CD4-positive, alpha-beta memory T cell (primary cell): ENCODE measurements at regions of chr11 and their contacts with region 1.

Region 1: DNA sequence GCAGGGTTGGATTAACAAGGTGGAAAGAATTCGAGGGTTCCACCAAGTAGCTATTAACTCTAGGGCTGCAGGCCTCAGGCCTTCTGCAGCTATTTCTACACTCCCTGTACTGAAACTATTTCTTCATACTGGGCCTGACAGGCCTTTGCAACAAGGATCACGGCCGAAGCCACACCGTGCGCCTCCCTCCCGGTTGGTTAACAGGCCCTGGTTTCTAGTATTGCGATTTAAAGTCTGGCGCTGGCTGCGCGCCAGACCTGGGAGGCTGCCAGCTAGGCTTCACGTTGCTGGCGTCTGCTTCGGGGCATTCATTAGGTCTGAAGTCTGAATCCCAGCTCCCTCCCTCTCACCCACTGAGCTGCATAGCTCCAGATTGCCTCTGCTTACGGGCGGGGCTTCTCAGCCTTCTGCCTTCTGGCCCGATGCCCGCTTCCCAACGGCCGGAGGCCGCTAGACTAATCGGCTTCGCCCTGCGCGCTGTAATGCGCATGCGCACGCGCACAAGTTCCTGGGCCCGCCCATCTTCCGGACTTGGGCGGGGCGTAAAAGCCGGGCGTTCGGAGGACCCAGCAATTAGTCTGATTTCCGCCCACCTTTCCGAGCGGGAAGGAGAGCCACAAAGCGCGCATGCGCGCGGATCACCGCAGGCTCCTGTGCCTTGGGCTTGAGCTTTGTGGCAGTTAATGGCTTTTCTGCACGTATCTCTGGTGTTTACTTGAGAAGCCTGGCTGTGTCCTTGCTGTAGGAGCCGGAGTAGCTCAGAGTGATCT is 1.6 kb downstream of the LDHA start:
- DNase-seq: peak; percentile 94 to 98 (median 97)
- H3K4me3 ChIP-seq: peak overlapping the region; percentile 72 to 98
- H3K4me3 Mint-ChIP-seq: peak overlapping the region; percentile 98 to 99 (median 98)
- H3K27ac ChIP-seq: peak overlapping the region; percentile 88
- H3K27ac Mint-ChIP-seq: peak overlapping the region; percentile 97 to 99 (median 98)
- H3K4me1 ChIP-seq: peaks cover 43% of the 10 kb centered on the region
- H3K4me1 Mint-ChIP-seq: peaks cover 17 to 71% (median 29%) of the 10 kb centered on the region in 4 donors
- H3K27me3 ChIP-seq: no peaks in the 10 kb centered on the region
- H3K27me3 Mint-ChIP-seq: peaks cover 0 to 2% of the 10 kb centered on the region in 2 donors

Region 2: DNA sequence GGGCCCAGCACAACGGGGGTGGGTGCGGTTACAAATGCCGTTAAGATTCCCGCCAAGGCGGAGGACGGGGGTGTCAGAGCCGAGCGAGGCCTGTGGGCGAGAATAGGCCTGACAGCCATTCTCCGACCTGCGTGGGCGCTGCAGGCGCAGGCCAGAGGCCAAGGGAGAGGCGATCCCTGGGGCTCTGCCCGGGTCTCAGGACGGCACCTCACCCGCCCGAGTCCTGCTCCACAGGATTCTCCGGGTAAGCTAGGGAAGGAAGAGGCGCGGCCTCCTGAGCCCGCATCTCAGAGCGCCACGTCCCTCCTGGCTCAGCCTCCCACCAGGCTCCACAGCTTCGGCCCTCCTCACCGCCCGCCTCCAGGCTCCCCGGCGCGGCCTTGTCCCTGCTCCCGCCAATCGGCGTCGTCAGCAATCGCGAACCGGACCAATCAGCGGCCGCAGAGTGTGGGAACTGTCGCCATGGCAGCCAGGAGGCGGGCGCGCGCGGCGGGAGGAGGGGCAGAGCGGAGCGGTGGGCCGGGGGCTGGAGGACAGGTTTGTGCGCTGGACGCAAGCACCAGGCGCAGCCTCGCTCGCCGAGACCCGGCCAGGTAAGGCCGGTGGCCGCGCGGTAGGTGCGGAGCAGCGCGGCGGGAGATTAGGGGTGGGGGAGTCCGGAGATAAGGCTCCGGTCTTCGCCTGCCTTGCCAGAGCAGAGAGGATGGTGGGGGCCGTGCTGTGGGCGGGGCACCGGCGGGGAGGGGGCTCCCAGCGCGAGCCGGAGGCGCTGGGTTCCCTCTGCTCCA is 1119.5 kb before region 1 on chr11 and contains the start of gene NUCB2:
- CTCF ChIA-PET with region 1: no interaction called
- POLR2A ChIA-PET with region 1: no interaction called
- intact Hi-C with region 1: loop called (anchors 10 kb)
- DNase-seq: peak; percentile 93 to 95 (median 93)
- H3K4me3 ChIP-seq: peak within 1 kb of the TSS; percentile 71 to 89
- H3K4me3 Mint-ChIP-seq: peak within 1 kb of the TSS; percentile 80 to 97 (median 88)
- H3K27ac ChIP-seq: peak within 1 kb of the TSS; percentile 82
- H3K27ac Mint-ChIP-seq: peak within 1 kb of the TSS; percentile 75 to 97 (median 95)
- H3K4me1 ChIP-seq: peaks cover 36% of the 10 kb centered on the region
- H3K4me1 Mint-ChIP-seq: peaks cover 18 to 45% (median 31%) of the 10 kb centered on the region in 4 donors
- H3K27me3 ChIP-seq: no peaks in the 10 kb centered on the region
- H3K27me3 Mint-ChIP-seq: no peaks in the 10 kb centered on the region
- total RNA-seq, gene NUCB2: 53.2 to 57.6 TPM

Region 3: GRCh38 chr11:18243783-18244362 is 152.0 kb before region 1 on chr11:
- CTCF ChIA-PET with region 1: interaction called, 18 read pairs
- POLR2A ChIA-PET with region 1: interaction called, 6 read pairs
- intact Hi-C with region 1: no loop called
- DNase-seq: peak; percentile 71 to 79 (median 73)
- H3K4me3 ChIP-seq: no peak overlapping the region
- H3K4me3 Mint-ChIP-seq: peak overlapping the region in 1 of 8 donors; percentile 46
- H3K27ac ChIP-seq: no peak overlapping the region
- H3K27ac Mint-ChIP-seq: peak overlapping the region in 6 of 7 donors; percentile 2 to 48 (median 24)
- H3K4me1 ChIP-seq: peaks cover 8% of the 10 kb centered on the region
- H3K4me1 Mint-ChIP-seq: peaks cover 10 to 27% (median 18%) of the 10 kb centered on the region in 4 donors
- H3K27me3 ChIP-seq: peaks cover 3% of the 10 kb centered on the region
- H3K27me3 Mint-ChIP-seq: peaks cover 8 to 9% of the 10 kb centered on the region in 2 donors

Region 4: DNA sequence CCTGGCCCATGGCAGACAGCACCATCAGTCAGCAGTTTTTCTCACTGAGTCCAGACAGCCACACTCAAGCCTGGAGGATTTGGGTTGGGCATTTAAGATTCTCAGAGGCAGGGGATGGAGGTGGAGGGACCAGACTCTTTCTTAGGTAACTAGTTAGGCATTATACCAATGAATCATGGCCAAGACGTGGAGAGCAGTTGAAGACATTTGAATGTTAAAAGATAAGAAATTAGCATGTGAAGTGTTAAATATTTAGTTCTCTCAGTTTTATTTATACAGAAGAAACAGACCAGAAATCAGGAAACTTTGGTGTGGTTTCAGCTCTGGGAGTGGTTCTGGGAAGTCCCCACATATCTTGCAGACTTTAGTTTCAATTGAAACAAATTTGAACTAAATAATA is 63.6 kb before region 1 on chr11:
- CTCF ChIA-PET with region 1: interaction called, 4 read pairs
- POLR2A ChIA-PET with region 1: interaction called, 33 read pairs
- intact Hi-C with region 1: loop called (anchors 2 kb)
- DNase-seq: peak; percentile 45 to 82 (median 57)
- H3K4me3 ChIP-seq: peak overlapping the region; percentile 11 to 19
- H3K4me3 Mint-ChIP-seq: peak overlapping the region; percentile 62 to 89 (median 79)
- H3K27ac ChIP-seq: peak overlapping the region; percentile 71
- H3K27ac Mint-ChIP-seq: peak overlapping the region; percentile 92 to 95 (median 94)
- H3K4me1 ChIP-seq: peaks cover 69% of the 10 kb centered on the region
- H3K4me1 Mint-ChIP-seq: peaks cover 43 to 69% (median 60%) of the 10 kb centered on the region in 4 donors
- H3K27me3 ChIP-seq: no peaks in the 10 kb centered on the region
- H3K27me3 Mint-ChIP-seq: no peaks in the 10 kb centered on the region

Region 5: DNA sequence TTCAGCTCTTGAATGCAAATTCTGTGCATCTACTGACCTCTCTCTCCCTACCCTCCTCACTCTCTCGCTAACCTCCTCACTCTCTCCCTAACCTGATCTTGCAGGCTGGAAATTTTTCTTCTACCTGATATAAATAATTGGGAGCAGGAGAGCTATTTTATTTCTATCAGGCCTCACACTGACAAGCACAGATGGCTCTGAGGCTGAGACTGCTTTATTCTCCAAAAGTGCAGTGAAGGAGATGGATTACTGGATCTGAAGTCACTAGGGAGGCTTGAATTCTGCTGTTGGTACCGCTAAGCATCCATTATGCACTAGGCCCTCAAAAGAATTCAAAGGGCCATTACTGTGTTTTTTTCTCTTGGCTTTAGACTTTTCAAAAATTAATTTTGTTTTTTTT is 21.0 kb before region 1 on chr11:
- CTCF ChIA-PET with region 1: no interaction called
- POLR2A ChIA-PET with region 1: interaction called, 15 read pairs
- intact Hi-C with region 1: no loop called
- DNase-seq: no peak
- H3K4me3 ChIP-seq: no peak overlapping the region
- H3K4me3 Mint-ChIP-seq: no peak overlapping the region
- H3K27ac ChIP-seq: no peak overlapping the region
- H3K27ac Mint-ChIP-seq: no peak overlapping the region
- H3K4me1 ChIP-seq: no peaks in the 10 kb centered on the region
- H3K4me1 Mint-ChIP-seq: peaks cover 0 to 4% (median under 1%) of the 10 kb centered on the region in 4 donors
- H3K27me3 ChIP-seq: no peaks in the 10 kb centered on the region
- H3K27me3 Mint-ChIP-seq: no peaks in the 10 kb centered on the region

Region 6: DNA sequence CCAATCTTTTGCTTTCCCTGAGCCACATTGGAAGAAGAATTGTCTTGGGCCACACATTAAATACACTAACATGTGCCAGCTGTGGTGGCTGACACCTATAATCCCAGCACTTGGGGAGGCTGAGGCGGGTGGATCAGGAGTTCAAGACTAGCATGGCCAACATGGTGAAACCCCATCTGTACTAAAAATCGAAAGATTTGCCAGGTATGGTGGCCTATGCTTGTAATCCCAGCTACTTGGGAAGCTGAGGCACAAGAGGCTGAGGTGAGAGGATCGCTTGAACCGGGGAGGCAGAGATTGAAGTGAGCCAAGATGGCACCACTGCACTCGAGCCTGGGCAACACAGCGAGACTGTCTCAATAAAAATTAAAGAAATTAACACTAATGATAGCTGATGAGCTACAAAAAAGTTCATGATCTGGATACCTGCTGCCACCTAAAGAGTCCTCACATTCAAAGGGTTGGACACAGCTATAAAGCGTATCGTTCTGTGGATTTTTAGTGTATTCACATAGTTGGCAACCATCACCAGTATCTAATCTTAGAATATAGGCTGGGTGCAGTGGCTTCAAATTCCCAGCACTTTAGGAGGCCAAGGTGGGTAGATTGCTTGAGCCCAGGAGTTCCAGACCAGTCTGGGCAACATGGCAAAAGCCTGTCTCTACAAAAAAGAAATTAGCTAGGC is 12.8 kb after region 1 on chr11:
- CTCF ChIA-PET with region 1: interaction called, 3 read pairs
- POLR2A ChIA-PET with region 1: interaction called, 14 read pairs
- intact Hi-C with region 1: no loop called
- DNase-seq: no peak
- H3K4me3 ChIP-seq: no peak overlapping the region
- H3K4me3 Mint-ChIP-seq: no peak overlapping the region
- H3K27ac ChIP-seq: no peak overlapping the region
- H3K27ac Mint-ChIP-seq: peak overlapping the region in 3 of 7 donors; percentile 15 to 74 (median 21)
- H3K4me1 ChIP-seq: peaks cover 8% of the 10 kb centered on the region
- H3K4me1 Mint-ChIP-seq: peaks cover 5 to 19% (median 11%) of the 10 kb centered on the region in 4 donors
- H3K27me3 ChIP-seq: no peaks in the 10 kb centered on the region
- H3K27me3 Mint-ChIP-seq: no peaks in the 10 kb centered on the region